ENCODE measurements at regions of chr16 and their contacts with region 1.

Region 1: DNA sequence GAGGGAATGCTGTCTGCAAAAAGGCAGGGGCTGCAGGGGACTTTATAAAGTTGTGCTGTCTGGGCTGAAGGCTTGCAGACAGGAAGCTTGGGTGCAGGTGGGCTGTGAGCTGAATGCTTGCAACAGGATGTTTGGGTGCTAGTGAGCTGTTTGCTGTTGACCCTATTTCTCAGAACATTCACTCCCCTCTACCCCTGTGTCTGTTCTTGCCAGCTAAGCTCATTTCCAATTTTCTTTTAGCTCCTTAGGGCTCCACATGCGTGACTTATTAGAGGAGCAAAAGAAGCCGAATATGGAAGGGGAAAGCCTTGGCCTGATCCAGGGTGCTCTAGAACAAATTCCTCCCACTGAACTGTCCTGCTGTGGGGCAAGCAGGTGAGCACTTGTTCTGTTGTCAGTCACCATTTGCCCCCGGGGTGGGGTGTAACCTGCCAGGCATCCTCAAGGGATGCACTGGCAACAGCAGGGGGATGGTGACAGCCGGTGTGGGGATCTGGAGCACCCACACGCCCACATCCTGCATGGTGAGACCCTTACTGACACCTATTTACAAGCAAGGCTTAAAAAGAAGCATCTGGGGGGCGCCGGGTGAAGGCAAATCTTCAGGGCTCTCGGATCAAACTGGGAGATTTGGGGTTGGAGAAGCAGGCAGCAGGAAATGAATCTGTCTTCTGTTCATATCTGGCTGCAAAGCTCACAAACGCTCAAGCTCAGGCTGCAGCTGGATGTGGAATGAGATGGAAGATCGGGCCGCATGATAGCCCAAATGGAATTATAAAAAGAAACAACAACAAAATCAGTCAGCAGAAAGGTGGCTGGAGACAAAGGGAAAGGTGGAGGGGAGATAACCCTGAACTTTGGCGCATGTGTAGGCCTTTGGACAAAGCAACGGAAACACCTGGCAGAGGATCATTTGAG is 21.1 kb upstream of the NUP93 start:
- DNase-seq: no peak
- H3K4me3 ChIP-seq: no peak overlapping the region
- H3K27ac ChIP-seq: peak overlapping the region in 1 of 4 donors; percentile 35
- H3K4me1 ChIP-seq: no peaks in the 10 kb centered on the region
- H3K27me3 ChIP-seq: no peaks in the 10 kb centered on the region
- CTCF ChIP-seq: no peak
- EP300 ChIP-seq: no peak
- POLR2A ChIP-seq: peak; percentile 11

Region 2: DNA sequence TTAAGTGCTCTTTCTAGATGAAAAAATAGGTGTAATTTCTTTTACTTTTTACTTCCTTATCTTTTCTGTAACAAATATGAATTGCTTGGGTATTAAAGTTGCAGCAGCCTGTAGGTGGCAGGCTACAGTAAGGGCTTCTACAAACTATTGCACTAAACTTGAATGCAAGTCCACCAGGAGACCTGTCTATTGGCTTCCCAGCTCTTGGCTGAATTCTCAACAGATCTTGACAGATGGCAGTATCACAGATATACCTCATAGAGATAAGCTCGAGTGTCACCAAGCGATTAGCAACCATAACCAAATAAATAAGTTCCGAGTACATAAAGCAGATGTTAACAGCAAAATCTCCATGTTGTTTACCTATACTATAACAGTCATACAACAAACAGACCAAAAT is 194.8 kb before region 1 on chr16:
- in situ Hi-C with region 1: loop called in 2 of 4 experiments (anchors 5 kb)
- intact Hi-C with region 1: loop called (anchors 5 kb)
- DNase-seq: peak; percentile 60
- H3K4me3 ChIP-seq: no peak overlapping the region
- H3K27ac ChIP-seq: no peak overlapping the region
- H3K4me1 ChIP-seq: peaks cover 3 to 27% (median 5%) of the 10 kb centered on the region in 4 donors
- H3K27me3 ChIP-seq: no peaks in the 10 kb centered on the region
- CTCF ChIP-seq: peak; percentile 56 to 67 (median 64)
- EP300 ChIP-seq: no peak
- POLR2A ChIP-seq: no peak

Region 3: GRCh38 chr16:56576585-56577293 is 132.0 kb before region 1 on chr16:
- in situ Hi-C with region 1: loop called in 3 of 4 experiments (anchors 5 to 10 kb)
- intact Hi-C with region 1: loop called (anchors 5 kb)
- DNase-seq: peak; percentile 90
- H3K4me3 ChIP-seq: no peak overlapping the region
- H3K27ac ChIP-seq: no peak overlapping the region
- H3K4me1 ChIP-seq: no peaks in the 10 kb centered on the region
- H3K27me3 ChIP-seq: no peaks in the 10 kb centered on the region
- CTCF ChIP-seq: peak; percentile 73 to 91 (median 86)
- EP300 ChIP-seq: no peak
- POLR2A ChIP-seq: no peak

Region 4: GRCh38 chr16:56589141-56590039 is 119.4 kb before region 1 on chr16 and contains the start of gene MT3:
- in situ Hi-C with region 1: loop called in 1 of 4 experiments (anchors 10 kb)
- intact Hi-C with region 1: no loop called
- DNase-seq: peak; percentile 38
- H3K4me3 ChIP-seq: peak within 1 kb of the TSS in 3 of 4 donors; percentile 9 to 53 (median 41)
- H3K27ac ChIP-seq: no peak within 1 kb of the TSS
- H3K4me1 ChIP-seq: peaks cover 0 to 13% (median 11%) of the 10 kb centered on the region in 4 donors
- H3K27me3 ChIP-seq: peaks cover 39% of the 10 kb centered on the region
- CTCF ChIP-seq: no peak
- EP300 ChIP-seq: no peak
- POLR2A ChIP-seq: no peak
- total RNA-seq, gene MT3: 4.2 TPM in 1 of 4 donors, not detected in the others

Region 5: GRCh38 chr16:56657555-56658326 is 51.0 kb before region 1 on chr16 and contains the start of gene MT1F:
- in situ Hi-C with region 1: no loop called
- intact Hi-C with region 1: no loop called
- DNase-seq: peak; percentile 96
- H3K4me3 ChIP-seq: peak within 1 kb of the TSS; percentile 21 to 54 (median 48)
- H3K27ac ChIP-seq: peak within 1 kb of the TSS; percentile 59 to 79 (median 75)
- H3K4me1 ChIP-seq: peaks cover 5 to 18% (median 16%) of the 10 kb centered on the region in 4 donors
- H3K27me3 ChIP-seq: peaks cover 22% of the 10 kb centered on the region
- CTCF ChIP-seq: no peak
- EP300 ChIP-seq: no peak
- POLR2A ChIP-seq: peak; percentile 61
- total RNA-seq, gene MT1F: 6.8 to 54.5 (median 18.9) TPM

Region 6: GRCh38 chr16:56898847-56899246 is 190.1 kb after region 1 on chr16:
- in situ Hi-C with region 1: no loop called
- intact Hi-C with region 1: no loop called
- DNase-seq: no peak
- H3K4me3 ChIP-seq: no peak overlapping the region
- H3K27ac ChIP-seq: no peak overlapping the region
- H3K4me1 ChIP-seq: no peaks in the 10 kb centered on the region
- H3K27me3 ChIP-seq: no peaks in the 10 kb centered on the region
- CTCF ChIP-seq: no peak
- EP300 ChIP-seq: no peak
- POLR2A ChIP-seq: no peak

Measured in transverse colon (tissue), 4 donors.